ENCODE measurements at regions of chr12 and their contacts with region 1.

Region 1: GRCh38 chr12:101759396-101760047 is 20.3 kb upstream of the SYCP3 start:
- DNase-seq: no peak

Region 2: GRCh38 chr12:101414533-101415119 is 344.9 kb before region 1 on chr12:
- intact Hi-C with region 1: loop called (anchors 10 kb)
- DNase-seq: peak in 1 of 10 donors; percentile 18

Region 3: DNA sequence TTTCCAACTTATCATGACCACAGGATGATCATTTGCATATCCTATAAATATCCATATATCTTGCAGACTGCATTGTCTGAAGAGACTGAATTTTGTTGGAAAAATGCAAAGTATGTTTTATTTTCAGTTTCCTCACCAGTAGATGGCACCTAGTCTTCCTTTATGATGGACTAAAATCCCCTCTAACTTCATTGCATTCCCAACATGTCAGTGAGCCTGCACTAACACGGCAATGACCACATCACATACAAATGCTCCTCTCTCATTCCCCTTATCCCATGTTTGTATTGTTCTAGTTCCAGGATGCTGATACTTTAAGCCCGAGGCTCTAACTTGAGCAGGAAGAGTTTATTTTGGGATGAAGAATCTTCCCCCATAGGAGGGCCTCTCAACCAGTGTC is 189.5 kb before region 1 on chr12:
- intact Hi-C with region 1: loop called (anchors 10 kb)
- DNase-seq: no peak

Region 4: DNA sequence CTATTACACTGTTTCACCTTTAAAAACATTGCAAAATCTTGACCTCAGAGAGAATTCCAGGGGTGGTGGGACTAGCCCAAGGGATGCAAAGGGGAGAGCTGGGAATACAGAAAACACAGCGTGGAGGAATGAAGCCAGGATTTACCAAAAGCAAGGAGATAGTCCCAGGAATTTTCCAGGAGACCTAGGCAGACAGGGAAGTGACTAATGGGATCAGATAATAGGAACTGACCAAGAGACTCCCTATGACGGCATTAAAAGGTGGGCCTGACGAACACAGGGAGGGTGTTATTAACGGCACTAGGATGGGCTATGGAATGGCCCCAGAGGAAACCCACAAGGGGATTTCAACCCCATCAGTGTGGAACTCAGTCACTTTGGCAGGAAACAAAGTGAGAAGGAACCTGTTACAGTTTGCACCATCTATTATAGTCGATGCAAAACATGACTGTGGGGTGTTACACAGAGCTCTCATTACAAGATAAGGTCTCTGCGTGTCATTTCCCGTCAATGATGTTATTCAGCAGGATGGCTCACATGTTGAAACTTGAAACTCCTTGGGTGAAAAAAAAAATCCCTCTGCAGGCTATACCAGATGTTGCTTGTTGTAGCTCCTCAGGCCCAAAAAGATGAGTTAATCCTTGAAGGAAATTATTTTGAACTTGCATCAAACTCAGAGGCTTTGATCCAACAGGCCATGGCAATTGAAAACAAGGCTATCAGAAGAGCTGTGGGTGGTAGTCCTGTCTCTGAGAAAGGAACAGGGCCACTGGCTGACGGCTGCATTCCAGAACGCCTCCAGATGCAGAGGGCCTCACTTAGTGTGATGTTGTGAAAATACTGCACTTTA is 176.6 kb after region 1 on chr12:
- intact Hi-C with region 1: no loop called
- DNase-seq: no peak

Region 5: DNA sequence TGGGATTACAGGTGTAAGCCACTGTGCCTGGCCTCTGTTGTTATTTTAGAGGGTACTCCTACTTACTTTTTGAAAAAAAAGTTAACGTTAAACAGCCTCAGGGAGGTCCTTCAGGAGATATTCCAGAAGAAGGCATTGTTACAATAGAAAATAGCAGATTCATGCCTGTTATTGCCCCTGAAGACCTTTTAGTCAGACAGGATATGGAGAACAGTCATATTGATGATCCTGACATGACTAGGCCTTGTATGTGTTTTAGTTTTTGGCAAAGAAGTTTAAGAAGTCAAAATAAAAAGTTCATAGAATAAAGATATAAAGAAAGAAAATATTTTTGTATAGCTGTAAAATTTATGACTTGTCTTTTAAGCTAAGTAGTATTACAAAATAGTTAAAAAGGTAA is 256.9 kb after region 1 on chr12:
- intact Hi-C with region 1: no loop called
- DNase-seq: no peak